ENCODE measurements at regions of chr6 and their contacts with region 1.

Region 1: GRCh38 chr6:54267798-54268197 is 40.4 kb upstream of the TINAG start:
- DNase-seq: peak; percentile 67
- ATAC-seq: peak; percentile 91
- H3K4me3 ChIP-seq: no peak overlapping the region
- H3K27ac ChIP-seq: no peak overlapping the region
- H3K4me1 ChIP-seq: no peaks in the 10 kb centered on the region
- H3K27me3 ChIP-seq: no peaks in the 10 kb centered on the region
- CTCF ChIP-seq: peak; percentile 70
- EP300 ChIP-seq: no peak
- POLR2A ChIP-seq: no peak
- RAD21 ChIP-seq: peak; percentile 48; the same call in 1 of the 2 replicates

Region 2: GRCh38 chr6:53615633-53616449 is 652.0 kb before region 1 on chr6:
- CTCF ChIA-PET with region 1: no interaction called
- POLR2A ChIA-PET with region 1: no interaction called
- in situ Hi-C with region 1: no loop called
- intact Hi-C with region 1: no loop called
- DNase-seq: peak; percentile 100
- ATAC-seq: peak; percentile 95
- H3K4me3 ChIP-seq: peak overlapping the region; percentile 35 to 60 (median 44); a peak in 5 of 6 replicates
- H3K27ac ChIP-seq: peak overlapping the region; percentile 97
- H3K4me1 ChIP-seq: peaks cover 53% of the 10 kb centered on the region
- H3K27me3 ChIP-seq: no peaks in the 10 kb centered on the region
- CTCF ChIP-seq: no peak; the same call in 1 of the 2 replicates
- EP300 ChIP-seq: peak; percentile 96 to 97
- POLR2A ChIP-seq: peak; percentile 73 to 91
- RAD21 ChIP-seq: no peak; the same call in 1 of the 2 replicates

Region 3: GRCh38 chr6:53979468-53980067 is 288.2 kb before region 1 on chr6:
- CTCF ChIA-PET with region 1: interaction called, 15 read pairs
- POLR2A ChIA-PET with region 1: no interaction called
- in situ Hi-C with region 1: no loop called
- intact Hi-C with region 1: no loop called
- DNase-seq: peak; percentile 43
- ATAC-seq: no peak
- H3K4me3 ChIP-seq: no peak overlapping the region
- H3K27ac ChIP-seq: no peak overlapping the region
- H3K4me1 ChIP-seq: no peaks in the 10 kb centered on the region
- H3K27me3 ChIP-seq: no peaks in the 10 kb centered on the region
- CTCF ChIP-seq: peak; percentile 77
- EP300 ChIP-seq: no peak
- POLR2A ChIP-seq: no peak
- RAD21 ChIP-seq: peak; percentile 59; the same call in 1 of the 2 replicates

Region 4: DNA sequence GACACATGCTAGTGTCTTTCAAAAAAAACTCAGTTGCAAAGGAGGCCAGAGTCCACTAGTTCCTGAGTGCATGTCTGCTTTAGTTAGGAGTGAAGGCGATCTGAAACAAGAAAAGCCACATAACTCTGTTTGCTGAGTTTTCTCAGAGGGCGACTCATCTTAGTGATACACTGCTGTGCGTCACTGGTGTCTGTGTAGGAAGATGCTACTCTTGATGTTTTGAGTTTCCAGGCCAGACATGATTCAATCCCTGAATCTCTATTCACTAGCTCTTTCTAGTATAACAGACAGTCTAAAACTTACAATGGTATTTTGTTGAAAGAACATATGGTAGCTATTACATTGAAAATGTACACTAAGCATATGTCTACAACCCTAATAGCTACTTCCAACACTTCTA is 1120.4 kb after region 1 on chr6:
- CTCF ChIA-PET with region 1: no interaction called
- POLR2A ChIA-PET with region 1: no interaction called
- in situ Hi-C with region 1: no loop called
- intact Hi-C with region 1: no loop called
- DNase-seq: no peak
- ATAC-seq: no peak
- H3K4me3 ChIP-seq: no peak overlapping the region
- H3K27ac ChIP-seq: no peak overlapping the region
- H3K4me1 ChIP-seq: no peaks in the 10 kb centered on the region
- H3K27me3 ChIP-seq: no peaks in the 10 kb centered on the region; a peak in 1 of 5 replicates
- CTCF ChIP-seq: no peak
- EP300 ChIP-seq: no peak
- POLR2A ChIP-seq: no peak
- RAD21 ChIP-seq: no peak

Measured in HepG2 (cell line).